GM10248 (cell line): ENCODE measurements at regions of chr3 and their contacts with region 1.

Region 1: DNA sequence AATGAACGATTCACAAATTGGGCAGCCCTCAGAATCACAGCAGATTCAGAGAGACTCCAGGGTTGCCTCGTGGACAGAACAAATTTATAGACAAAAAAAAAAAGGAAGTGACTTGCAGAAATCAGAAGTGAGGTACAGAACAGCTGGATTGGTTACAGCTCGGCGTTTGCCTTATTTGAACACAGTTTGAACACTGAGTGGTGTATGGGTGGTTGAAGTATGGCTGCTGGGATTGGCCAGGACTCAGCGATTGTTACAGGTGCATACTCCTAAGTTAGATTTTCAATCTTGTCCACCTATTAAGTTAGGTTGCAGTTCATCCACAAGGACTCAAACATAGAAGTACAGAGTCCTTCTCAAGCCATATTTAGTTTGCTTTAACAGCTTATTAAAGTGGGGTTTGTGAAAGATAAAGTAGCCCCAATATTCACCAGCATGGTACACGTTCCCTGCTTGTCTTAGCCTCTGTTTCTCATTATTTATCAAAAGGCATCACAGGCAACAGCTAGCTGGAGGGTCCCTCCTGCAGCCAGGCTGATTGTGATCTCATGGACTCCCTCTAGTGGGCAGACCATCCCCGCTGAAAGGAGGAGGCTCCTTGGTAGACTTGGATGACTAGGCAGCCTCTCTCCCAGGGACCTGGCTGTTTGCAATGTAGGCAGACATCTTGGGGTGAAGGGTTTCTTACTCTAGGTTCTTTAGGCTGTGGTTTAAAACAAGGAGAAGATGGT is 17.6 kb upstream of the ALDH1L1 start:
- DNase-seq: peak; percentile 54
- CTCF ChIP-seq: peak; percentile 61

Region 2: DNA sequence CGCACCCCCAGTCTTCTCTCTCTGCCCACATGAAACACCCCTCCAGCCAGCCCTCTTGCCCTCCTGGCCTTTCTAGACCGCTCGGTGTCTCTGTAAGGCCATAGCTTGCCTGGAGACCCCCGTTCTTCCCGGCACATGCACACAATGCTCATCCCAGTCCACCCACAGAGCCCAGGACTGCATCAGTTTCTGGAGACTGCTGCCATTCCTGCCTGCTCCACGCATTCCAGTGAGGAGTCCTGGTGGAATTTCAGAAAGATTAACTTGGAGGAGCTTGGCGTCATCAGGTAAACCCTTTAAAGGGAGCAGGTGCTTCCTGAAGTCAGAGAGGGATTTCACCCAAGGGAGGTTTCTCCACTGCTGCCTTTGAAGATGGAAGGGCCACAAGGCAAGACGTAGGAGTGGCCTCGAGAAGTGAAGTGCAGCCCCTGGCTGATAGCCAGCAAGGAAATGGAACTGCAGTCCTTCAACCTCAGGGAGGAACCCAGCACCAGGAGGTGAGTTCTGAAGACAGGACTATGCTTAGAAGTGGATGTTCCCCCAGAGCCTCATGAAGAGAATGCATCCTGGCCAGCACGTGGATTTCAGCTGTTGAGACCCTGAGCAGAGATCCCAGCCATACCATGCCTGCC is 133.3 kb before region 1 on chr3:
- CTCF ChIA-PET with region 1: no interaction called
- POLR2A ChIA-PET with region 1: no interaction called
- DNase-seq: peak; percentile 43
- CTCF ChIP-seq: no peak

Region 3: GRCh38 chr3:126186271-126186670 is 11.7 kb before region 1 on chr3:
- CTCF ChIA-PET with region 1: interaction called, 12 read pairs
- POLR2A ChIA-PET with region 1: no interaction called
- DNase-seq: no peak
- CTCF ChIP-seq: no peak

Region 4: DNA sequence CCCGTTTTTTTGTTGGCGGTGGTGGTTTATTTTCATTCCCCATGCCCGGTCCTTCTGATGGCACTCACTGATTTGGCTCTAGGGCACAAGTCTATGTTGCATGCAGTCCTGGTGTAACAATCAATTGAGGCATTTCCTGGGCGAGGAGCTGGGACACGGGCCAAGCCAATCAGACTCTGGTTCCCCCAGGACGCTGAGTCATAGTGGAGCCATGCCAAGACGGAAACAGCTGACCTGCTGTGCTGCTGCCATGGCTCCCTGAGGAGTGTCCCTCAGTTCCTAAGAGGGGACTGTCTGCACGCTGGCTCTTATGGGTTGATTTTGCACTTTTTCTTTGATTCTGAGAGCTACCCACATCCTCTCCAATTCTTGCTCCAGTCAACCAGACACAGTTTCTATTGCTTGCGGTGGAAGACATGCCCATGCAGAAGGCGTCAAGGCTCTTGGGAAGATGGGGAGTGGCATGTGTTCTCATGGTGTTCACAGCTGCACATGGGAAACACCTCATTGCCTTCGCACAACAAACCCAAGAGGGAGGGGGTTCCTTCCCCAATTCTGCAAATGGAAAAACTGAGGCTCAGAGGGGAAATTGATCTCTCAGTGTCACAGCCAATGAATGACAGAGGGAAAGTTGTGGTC is 10.7 kb after region 1 on chr3:
- CTCF ChIA-PET with region 1: interaction called, 35 read pairs
- POLR2A ChIA-PET with region 1: no interaction called
- DNase-seq: no peak
- CTCF ChIP-seq: no peak